OCI-LY7 (cell line): ENCODE measurements at regions of chr16 and their contacts with region 1.

Region 1: DNA sequence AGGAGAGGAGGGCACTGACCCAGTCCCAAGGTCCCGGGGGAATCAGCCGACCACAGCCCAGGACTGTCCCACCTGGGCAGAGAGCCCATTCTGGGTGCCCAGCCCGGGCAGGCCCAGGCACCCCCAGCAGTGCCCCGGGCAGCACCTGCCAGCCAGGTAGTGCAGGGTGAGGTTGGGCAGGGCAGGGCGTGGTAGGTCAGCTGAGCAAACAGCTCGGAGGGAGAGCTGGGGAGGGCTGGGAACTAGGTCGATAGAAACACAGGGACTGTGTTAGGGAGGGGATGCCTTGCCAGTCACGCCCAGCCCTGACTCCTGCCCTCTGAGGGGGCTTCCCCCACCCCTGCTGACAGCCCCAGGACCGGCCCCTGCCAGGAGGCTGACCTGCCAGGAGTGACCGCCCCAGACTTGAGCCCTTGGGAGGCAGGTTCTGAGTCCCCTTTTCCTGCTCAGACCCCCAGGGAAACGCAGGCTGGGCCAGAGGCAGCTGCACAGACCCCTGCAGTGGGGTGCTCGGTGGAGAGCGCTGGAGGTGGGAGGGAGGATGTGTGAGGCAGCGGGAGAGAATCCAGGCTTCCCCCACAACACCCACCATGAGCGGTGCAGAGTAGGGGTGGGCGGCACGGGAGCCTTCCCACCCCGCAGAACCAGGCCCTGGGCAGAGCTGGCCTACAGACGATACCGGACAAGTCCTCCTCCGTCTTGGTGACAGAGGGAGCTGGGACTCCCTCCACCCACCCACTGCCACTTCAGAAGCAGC is 4.7 kb downstream of the HS3ST6 start:
- DNase-seq: no peak
- H3K4me3 ChIP-seq: no peak overlapping the region
- H3K27ac ChIP-seq: no peak overlapping the region
- H3K4me1 ChIP-seq: no peaks in the 10 kb centered on the region
- CTCF ChIP-seq: no peak

Region 2: DNA sequence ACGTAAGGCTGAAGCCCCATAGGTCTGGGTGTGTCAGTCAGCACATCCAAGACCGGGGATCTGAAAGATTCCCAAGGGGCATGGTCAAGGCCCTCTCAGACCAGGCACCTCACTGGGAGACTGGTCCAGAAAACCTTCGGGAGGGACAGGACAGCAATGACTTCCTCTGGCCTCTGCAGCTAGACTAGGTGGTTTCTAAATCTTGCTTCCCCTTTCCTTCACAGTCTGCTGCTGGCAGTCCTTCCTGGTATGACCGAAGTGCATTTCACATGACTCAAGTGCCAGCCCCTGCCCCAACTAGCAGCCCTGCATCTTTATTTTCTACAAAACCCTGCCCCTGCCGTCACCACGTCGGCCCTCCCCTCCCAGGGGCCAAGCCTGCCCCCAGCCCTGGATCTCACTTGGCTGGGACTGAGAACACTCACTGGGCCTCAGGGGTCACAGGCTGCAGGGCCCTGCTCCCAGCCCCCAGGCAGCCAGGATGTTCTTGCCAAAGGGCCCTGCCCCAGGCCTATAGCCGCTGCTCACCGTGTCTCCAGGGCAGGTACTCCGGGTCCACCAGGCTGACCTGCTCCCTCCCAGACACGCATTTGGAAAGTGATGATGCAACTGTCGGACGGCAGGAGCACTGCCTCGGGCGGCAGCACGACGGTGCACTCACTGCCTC is 1878.4 kb before region 1 on chr16:
- CTCF ChIA-PET with region 1: no interaction called
- POLR2A ChIA-PET with region 1: no interaction called
- intact Hi-C with region 1: no loop called
- DNase-seq: peak; percentile 37
- H3K4me3 ChIP-seq: no peak overlapping the region
- H3K27ac ChIP-seq: peak overlapping the region; percentile 21
- H3K4me1 ChIP-seq: peaks cover 28% of the 10 kb centered on the region
- CTCF ChIP-seq: no peak

Region 3: GRCh38 chr16:1812732-1813163 is 100.8 kb before region 1 on chr16:
- CTCF ChIA-PET with region 1: no interaction called
- POLR2A ChIA-PET with region 1: interaction called, 10 read pairs
- intact Hi-C with region 1: no loop called
- DNase-seq: peak; percentile 35
- H3K4me3 ChIP-seq: no peak overlapping the region
- H3K27ac ChIP-seq: no peak overlapping the region
- H3K4me1 ChIP-seq: no peaks in the 10 kb centered on the region
- CTCF ChIP-seq: peak; percentile 69

Region 4: GRCh38 chr16:2816751-2817339 is 903.3 kb after region 1 on chr16 and contains the start of gene PRSS21:
- CTCF ChIA-PET with region 1: interaction called, 11 read pairs
- POLR2A ChIA-PET with region 1: no interaction called
- intact Hi-C with region 1: no loop called
- DNase-seq: peak; percentile 68
- H3K4me3 ChIP-seq: peak within 1 kb of the TSS; percentile 86
- H3K27ac ChIP-seq: peak within 1 kb of the TSS; percentile 54
- H3K4me1 ChIP-seq: peaks cover 18% of the 10 kb centered on the region
- CTCF ChIP-seq: peak; percentile 72
- total RNA-seq, gene PRSS21: 44.5 and 68.7 TPM in 2 replicates